ENCODE measurements at regions of chr18 and their contacts with region 1.

Region 1: GRCh38 chr18:54109131-54109683 is 115.3 kb downstream of the MBD2 start:
- DNase-seq: no peak
- ATAC-seq: no peak
- H3K4me3 ChIP-seq: no peak overlapping the region
- H3K27ac ChIP-seq: no peak overlapping the region
- H3K4me1 ChIP-seq: no peaks in the 10 kb centered on the region
- H3K27me3 ChIP-seq: peaks cover 4% of the 10 kb centered on the region
- CTCF ChIP-seq: no peak

Region 2: DNA sequence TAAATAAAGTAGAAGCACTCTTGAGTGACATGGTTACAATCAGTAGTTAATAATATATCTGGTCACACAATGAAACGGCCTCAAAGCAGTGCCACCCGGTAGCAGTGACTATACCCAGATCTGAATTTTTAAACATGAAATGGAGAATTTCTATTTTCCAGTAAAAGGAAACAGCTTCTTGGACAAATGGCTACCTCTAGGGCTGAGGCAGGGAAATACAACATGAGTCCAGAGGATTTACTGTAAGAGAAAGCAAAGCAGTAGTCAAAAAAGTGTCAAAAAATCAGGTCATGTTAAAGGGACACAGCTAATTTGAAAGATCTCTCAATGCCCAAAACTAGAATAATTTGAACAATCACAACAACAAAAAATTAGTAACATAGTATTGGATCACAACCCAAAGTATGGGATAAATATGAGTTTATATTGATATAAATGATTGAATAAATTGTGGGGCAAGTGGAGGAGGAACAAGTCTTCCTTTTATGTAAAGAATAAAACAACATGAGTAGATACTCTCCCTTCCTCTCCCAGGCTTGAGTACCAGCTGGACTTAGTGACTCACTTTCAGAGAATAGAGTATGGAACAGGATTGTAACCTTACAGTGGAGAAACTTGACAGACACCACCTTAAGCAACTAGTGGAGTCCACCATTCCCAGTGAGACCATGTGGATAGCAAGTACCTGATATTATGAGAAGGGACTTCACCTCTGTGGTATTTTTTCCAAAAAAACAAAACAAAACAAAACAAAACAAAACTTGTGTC is 65.5 kb before region 1 on chr18:
- intact Hi-C with region 1: loop called (anchors 10 kb)
- DNase-seq: no peak
- ATAC-seq: no peak
- H3K4me3 ChIP-seq: no peak overlapping the region
- H3K27ac ChIP-seq: no peak overlapping the region
- H3K4me1 ChIP-seq: no peaks in the 10 kb centered on the region
- H3K27me3 ChIP-seq: no peaks in the 10 kb centered on the region
- CTCF ChIP-seq: no peak